ENCODE measurements at regions of chr9 and their contacts with region 1.

Region 1: DNA sequence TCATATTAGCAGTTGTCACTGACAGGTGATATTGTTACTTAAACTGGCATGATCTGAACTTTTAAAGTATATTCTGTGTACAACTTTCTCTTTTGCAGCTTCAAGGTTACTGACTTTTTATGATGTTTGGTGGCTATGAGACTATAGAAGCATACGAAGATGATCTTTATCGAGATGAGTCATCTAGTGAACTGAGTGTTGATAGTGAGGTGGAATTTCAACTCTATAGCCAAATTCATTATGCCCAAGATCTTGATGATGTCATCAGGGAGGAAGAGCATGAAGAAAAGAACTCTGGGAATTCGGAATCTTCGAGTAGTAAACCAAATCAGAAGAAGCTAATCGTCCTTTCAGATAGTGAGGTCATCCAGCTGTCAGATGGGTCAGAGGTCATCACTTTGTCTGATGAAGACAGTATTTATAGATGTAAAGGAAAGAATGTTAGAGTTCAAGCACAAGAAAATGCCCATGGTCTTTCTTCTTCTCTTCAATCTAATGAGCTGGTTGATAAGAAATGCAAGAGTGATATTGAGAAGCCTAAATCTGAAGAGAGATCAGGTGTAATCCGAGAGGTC is 5.9 kb downstream of the ZCCHC7 start:
- DNase-seq: no peak
- CTCF ChIP-seq: no peak

Region 2: GRCh38 chr9:36935768-36936497 is 190.4 kb before region 1 on chr9:
- CTCF ChIA-PET with region 1: no interaction called
- POLR2A ChIA-PET with region 1: no interaction called
- DNase-seq: peak; percentile 72
- CTCF ChIP-seq: no peak

Region 3: DNA sequence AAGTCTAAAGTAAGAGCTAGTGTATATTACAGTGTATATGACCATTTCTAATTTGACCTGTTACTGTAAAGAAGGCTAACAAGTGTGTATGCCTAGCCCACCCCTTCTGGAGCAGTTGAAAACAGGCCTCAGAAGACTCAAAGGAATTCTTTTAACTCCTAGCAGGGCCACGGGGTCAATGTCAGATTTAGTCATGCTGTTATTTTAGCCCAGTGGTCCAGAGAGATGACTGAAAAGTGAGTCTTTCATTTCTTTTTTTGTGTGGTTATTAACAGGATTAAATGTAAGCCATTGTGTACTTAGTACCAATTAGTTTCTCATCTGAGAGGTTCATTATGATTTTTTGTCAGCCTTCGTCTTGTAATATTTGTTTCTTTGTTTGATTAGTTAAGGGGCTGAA is 18.5 kb after region 1 on chr9:
- CTCF ChIA-PET with region 1: interaction called, 10 read pairs
- POLR2A ChIA-PET with region 1: no interaction called
- DNase-seq: peak; percentile 11
- CTCF ChIP-seq: no peak